Naive thymus-derived CD4-positive, alpha-beta T cell (primary cell): ENCODE measurements at regions of chr19 and their contacts with region 1.

Region 1: DNA sequence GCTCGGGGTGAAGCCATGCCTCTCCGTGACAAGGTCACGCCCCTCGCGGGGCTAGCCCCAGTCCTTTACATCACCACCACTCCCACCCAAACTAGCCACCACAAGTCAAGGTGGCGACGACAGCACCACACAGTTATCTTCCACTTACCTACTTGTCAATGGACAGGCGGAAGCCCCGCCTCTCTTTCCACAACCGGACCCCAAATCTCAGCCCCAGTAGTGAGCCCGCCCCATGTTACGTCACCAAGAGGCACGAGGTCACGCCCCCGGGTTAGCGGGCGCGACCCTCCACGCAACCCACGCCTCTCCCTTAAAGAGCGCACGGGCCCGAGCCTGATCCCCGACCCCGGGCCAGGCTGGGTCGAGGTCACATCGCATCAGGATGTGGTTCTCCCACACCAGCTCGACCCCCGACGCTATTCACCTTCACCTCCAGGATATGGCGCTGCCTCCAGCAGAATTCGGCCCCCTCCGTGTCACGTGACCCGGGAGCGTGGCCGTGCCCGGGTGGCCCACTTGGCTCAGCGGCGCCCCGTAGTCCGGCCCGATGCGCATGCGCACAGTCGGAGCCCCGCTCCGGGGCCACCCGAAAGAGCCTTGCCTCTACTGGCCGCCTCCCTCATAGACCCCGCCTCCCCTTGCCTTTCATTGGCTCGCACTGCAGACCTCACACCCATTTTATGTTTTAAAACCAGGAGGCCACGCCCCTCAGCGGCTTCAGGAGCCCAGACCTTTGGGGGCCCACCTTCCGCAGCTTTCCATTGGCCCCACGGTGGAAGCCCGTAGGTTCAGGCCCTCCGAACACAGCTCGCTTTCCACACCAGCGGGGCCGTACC is 18.2 kb downstream of the SYDE1 start:
- DNase-seq: peak; percentile 94 to 98 (median 96)
- ATAC-seq: peak; percentile 93
- H3K4me3 ChIP-seq: peak overlapping the region; percentile 90
- H3K4me3 Mint-ChIP-seq: peak overlapping the region; percentile 89 to 100 (median 98)
- H3K27ac ChIP-seq: peak overlapping the region; percentile 92
- H3K27ac Mint-ChIP-seq: peak overlapping the region; percentile 91 to 100 (median 97)
- H3K4me1 ChIP-seq: peaks cover 0 to 25% of the 10 kb centered on the region in 2 donors
- H3K4me1 Mint-ChIP-seq: peaks cover 27 to 59% (median 44%) of the 10 kb centered on the region in 7 donors
- H3K27me3 ChIP-seq: no peaks in the 10 kb centered on the region
- H3K27me3 Mint-ChIP-seq: peaks cover 0 to 2% (median 0%) of the 10 kb centered on the region in 5 donors

Region 2: DNA sequence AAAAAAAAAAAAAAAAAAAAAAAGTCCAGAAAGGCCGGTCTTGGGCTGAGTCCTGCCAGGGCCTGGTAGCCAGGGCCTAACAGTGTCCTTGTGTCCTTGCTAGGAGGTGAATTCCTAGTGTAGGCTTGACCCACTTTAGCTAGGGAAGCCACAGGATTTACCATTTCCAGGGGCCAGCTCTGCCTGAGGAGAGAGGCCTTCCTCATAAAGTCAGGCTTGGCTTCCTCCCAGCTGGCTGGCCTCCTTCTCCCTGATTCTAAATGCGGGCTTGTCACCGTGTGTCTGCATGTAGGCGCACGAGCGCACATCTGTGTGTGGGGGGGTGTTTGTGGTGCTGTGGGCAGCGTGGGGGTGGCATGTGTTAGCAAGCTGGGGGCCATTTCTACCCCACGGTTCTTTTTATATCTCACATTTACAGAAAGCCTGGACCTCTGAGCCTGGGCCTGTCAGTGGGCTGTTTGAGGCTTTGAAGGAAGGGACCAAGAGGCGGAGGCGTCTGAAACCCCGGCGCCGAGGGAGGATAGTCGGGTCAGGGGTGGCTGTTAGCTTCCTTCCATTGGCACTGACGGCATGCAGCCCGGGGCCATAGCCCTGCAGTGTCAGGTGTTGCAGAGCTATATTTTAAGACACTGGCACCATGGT is 1943.6 kb before region 1 on chr19:
- CTCF ChIA-PET with region 1: no interaction called
- POLR2A ChIA-PET with region 1: no interaction called
- intact Hi-C with region 1: loop called in 1 of 2 experiments (anchors 5 kb)
- DNase-seq: no peak
- ATAC-seq: peak; percentile 71
- H3K4me3 ChIP-seq: no peak overlapping the region
- H3K4me3 Mint-ChIP-seq: peak overlapping the region in 8 of 10 donors; percentile 24 to 71 (median 62)
- H3K27ac ChIP-seq: no peak overlapping the region
- H3K27ac Mint-ChIP-seq: peak overlapping the region; percentile 20 to 86 (median 76)
- H3K4me1 ChIP-seq: peaks cover 20 to 21% of the 10 kb centered on the region in 2 donors
- H3K4me1 Mint-ChIP-seq: peaks cover 14 to 43% (median 38%) of the 10 kb centered on the region in 7 donors
- H3K27me3 ChIP-seq: no peaks in the 10 kb centered on the region
- H3K27me3 Mint-ChIP-seq: no peaks in the 10 kb centered on the region

Region 3: DNA sequence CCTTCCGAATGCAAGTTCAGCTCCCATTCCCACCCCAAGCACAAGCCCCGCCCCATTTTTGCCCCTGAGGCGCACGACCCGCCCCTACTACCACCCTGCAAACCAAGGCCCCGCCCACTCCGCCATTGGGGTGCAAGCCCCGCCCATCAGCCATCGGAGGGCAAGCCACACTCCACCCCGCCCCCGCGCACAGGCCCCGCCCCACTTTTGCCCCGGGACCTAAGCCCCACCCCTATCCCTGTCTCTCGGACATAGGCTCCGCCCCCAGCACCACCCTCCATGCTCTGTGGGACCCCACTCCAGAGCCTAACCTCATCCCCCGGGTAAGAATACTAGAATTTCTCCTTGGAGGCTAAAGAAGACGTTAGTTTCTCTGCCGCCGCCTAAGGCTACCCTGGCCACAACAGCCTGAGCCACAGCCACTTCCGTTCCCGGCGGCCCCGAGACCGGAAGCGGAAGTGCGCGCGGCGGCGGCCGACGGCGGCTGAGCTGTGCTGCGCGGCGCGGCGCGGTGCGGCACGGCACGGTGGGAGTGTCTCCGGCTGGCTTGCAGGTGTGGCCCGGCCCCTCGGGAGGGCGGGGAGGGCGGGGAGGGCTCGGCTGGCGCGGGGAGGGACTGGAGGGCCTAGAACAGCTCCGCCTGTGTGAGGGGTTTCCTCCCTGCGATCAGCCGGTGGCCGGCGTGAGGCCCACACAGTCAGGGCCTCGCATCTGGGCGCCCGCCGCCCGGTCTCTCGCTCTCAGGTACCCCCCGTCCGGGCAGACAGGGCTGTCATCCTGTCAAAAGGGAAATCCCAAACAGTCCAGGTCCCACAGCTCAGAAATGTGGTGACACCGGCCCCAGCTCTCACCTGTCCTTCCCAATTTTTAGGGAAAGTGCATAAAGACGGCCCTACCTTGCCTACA is 435.6 kb before region 1 on chr19 and contains the start of gene ZNF333:
- CTCF ChIA-PET with region 1: no interaction called
- POLR2A ChIA-PET with region 1: no interaction called
- intact Hi-C with region 1: loop called in 1 of 2 experiments (anchors 1 kb)
- DNase-seq: peak; percentile 92 to 99 (median 96)
- ATAC-seq: peak; percentile 94
- H3K4me3 ChIP-seq: peak within 1 kb of the TSS; percentile 93
- H3K4me3 Mint-ChIP-seq: peak within 1 kb of the TSS; percentile 81 to 99 (median 94)
- H3K27ac ChIP-seq: peak within 1 kb of the TSS; percentile 97
- H3K27ac Mint-ChIP-seq: peak within 1 kb of the TSS; percentile 93 to 100 (median 99)
- H3K4me1 ChIP-seq: peaks cover 6 to 16% of the 10 kb centered on the region in 2 donors
- H3K4me1 Mint-ChIP-seq: peaks cover 5 to 26% (median 23%) of the 10 kb centered on the region in 7 donors
- H3K27me3 ChIP-seq: no peaks in the 10 kb centered on the region
- H3K27me3 Mint-ChIP-seq: peaks cover 0 to 2% (median 0%) of the 10 kb centered on the region in 5 donors
- total RNA-seq, gene ZNF333: 15.4 to 56.3 (median 34.7) TPM

Region 4: GRCh38 chr19:15015946-15016542 is 109.4 kb before region 1 on chr19:
- CTCF ChIA-PET with region 1: no interaction called
- POLR2A ChIA-PET with region 1: no interaction called
- intact Hi-C with region 1: no loop called
- DNase-seq: no peak
- ATAC-seq: no peak
- H3K4me3 ChIP-seq: no peak overlapping the region
- H3K4me3 Mint-ChIP-seq: no peak overlapping the region
- H3K27ac ChIP-seq: no peak overlapping the region
- H3K27ac Mint-ChIP-seq: no peak overlapping the region
- H3K4me1 ChIP-seq: no peaks in the 10 kb centered on the region
- H3K4me1 Mint-ChIP-seq: no peaks in the 10 kb centered on the region
- H3K27me3 ChIP-seq: peaks cover 0 to 7% of the 10 kb centered on the region in 2 donors
- H3K27me3 Mint-ChIP-seq: peaks cover 2 to 68% (median 56%) of the 10 kb centered on the region in 5 donors

Region 5: DNA sequence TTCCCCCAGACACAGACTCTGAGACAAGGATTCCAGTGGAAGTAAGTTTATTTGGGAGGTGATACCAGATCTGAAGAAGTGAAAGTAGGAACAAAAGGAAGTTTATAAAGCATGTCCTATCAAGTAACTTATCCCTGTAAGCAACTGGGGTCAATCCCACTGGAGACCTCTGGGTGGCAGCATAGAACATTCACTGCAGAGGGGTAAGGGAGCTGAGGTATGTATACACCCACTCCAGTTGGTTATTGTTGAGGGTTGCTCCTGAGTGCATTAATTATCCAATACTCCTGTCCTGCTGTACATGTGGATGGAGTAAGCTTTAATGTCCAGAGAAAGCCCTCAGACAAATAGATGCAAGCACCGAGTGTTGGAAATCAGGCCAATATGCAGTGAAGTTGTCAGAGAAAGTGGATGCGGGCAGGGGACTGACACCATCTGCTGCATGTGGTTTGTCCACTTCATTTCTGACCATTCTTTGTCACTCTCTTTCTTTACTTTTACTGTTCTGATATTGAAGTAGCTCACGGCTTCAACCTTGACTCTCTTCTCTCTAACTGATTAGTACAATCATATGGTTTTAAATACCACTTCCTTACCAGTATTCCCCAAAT is 28.7 kb after region 1 on chr19:
- CTCF ChIA-PET with region 1: interaction called, 5 read pairs
- POLR2A ChIA-PET with region 1: no interaction called
- intact Hi-C with region 1: loop called in 1 of 2 experiments (anchors 1 kb)
- DNase-seq: peak in 1 of 9 donors; percentile 8
- ATAC-seq: peak; percentile 63
- H3K4me3 ChIP-seq: no peak overlapping the region
- H3K4me3 Mint-ChIP-seq: no peak overlapping the region
- H3K27ac ChIP-seq: no peak overlapping the region
- H3K27ac Mint-ChIP-seq: no peak overlapping the region
- H3K4me1 ChIP-seq: no peaks in the 10 kb centered on the region
- H3K4me1 Mint-ChIP-seq: peaks cover 4 to 14% (median 7%) of the 10 kb centered on the region in 7 donors
- H3K27me3 ChIP-seq: no peaks in the 10 kb centered on the region
- H3K27me3 Mint-ChIP-seq: peaks cover 5 to 12% (median 8%) of the 10 kb centered on the region in 5 donors